Posterior vena cava (tissue), 2 donors: ENCODE measurements at regions of chr7 and their contacts with region 1.

Region 1: GRCh38 chr7:80781561-80781979 is 137.3 kb downstream of the SEMA3C start:
- DNase-seq: no peak

Region 2: DNA sequence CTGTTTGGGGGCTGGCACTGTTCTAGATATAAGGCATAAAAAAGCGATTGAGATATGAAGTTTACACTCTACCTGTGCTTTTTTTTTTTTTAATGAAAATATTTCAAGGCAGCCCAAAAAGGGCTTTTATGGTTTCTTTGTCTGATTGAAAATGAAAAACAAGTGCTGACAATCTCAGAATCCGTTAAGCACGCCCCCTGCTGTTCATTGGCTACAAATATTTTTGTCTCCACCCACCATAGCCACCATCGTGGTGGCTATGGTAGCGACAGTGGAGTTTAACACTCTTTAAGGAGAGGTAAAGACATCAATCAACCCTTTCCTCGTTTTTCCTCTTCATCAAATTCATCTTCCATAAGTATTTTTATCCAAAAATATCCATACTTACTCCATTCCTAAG is 48.9 kb before region 1 on chr7:
- intact Hi-C with region 1: loop called in 1 of 2 experiments (anchors 10 kb)
- DNase-seq: no peak

Region 3: GRCh38 chr7:80770675-80771081 is 10.9 kb before region 1 on chr7:
- intact Hi-C with region 1: loop called in 1 of 2 experiments (anchors 1 kb)
- DNase-seq: no peak